Esophagus squamous epithelium (tissue), 5 donors: ENCODE measurements at regions of chr6 and their contacts with region 1.

Region 1: DNA sequence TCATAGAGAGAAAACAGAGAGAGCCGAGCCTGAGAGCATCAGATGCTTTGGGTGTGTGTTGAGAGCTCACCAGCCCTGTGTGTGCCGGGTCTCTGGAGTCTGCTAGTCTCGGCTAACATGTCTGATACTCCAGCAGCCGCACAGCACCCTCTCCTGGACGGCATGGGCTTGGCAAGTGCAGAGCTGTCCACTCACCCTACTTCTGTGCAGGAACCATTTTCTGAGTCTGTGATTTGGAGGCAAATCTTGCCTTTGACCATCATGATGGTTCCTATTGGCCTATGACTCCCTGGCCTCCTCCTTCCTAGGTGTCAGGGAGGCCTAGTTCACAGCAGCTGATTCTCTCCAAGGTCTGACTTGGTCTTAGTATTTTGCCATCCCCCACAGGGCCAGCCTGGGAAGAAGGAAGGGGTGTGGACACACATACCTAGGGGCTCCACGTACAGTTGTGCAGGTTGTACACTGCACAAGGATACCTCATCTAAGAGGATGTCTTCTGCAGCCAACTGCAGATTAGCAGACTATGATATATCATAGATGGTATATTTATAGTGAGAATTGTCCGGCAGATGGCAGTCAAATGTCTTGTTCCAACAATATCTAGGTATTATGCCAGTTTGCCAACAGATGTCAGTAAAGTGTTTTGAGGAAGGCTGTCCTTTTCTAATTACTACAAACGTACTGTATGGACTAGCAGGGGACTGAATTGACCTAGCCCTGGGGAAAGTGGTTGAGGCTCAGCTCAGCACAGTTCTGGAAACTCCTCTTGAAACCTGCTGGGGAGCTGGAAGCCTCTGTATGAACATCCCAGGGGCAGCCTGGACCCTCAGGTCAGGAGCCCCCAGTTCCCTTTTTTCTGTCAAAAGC is 13.0 kb downstream of the FGD2 start:
- DNase-seq: peak; percentile 43
- H3K4me3 ChIP-seq: no peak overlapping the region
- H3K27ac ChIP-seq: peak overlapping the region; percentile 28 to 55 (median 40)
- H3K4me1 ChIP-seq: peaks cover 11 to 54% (median 14%) of the 10 kb centered on the region in 3 donors
- H3K27me3 ChIP-seq: no peaks in the 10 kb centered on the region
- CTCF ChIP-seq: peak; percentile 64 to 95 (median 88)
- POLR2A ChIP-seq: no peak

Region 2: DNA sequence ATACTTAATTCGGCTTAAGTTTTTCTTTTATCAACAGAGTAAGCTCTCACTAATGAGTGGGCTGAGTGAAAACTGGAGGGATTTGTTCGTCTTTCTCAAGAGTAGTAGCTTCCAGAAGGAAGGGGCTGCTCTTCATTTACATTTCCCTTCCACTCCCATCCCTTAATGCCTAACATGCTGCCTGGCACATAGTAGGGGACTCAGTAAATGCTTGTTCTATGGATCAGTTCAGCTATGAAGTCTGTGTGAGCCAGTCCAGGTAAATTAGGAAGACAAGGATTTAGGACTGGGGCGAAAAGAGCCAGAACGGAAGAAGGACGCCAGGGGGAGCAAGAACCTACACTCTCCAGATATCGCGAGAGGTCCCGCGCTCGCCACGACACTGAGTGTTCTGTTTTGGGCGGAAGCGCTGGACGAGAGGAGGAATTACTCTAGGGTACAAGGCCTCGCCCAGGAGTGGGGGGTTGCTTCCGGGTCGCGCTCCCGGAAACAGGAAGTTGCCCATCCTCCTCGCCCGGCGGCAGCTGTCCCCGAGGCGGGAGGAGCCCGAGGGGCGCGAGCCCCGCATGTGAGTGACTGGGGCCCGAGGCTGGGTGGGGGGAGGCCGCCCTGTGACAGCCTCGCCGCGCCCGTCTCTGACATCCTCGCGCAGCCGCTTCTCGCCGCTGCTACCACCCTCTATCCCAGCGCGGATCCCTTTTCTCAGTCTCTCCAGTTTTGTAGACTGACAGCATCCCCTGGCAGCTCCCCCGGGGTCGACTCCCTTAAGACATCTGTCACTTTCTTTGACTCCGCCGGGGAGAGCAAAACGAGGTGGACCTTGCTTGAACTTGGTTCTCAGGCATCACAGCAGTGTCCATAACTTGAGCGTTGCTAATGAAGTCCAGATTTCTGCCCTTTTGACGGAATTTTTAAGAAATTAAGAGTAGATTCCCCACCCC is 132.7 kb before region 1 on chr6 and contains the start of gene C6orf89:
- intact Hi-C with region 1: loop called (anchors 10 kb)
- DNase-seq: peak; percentile 95
- H3K4me3 ChIP-seq: peak within 1 kb of the TSS; percentile 79 to 92 (median 83)
- H3K27ac ChIP-seq: peak within 1 kb of the TSS; percentile 89 to 93 (median 93)
- H3K4me1 ChIP-seq: peaks cover 0 to 38% (median 15%) of the 10 kb centered on the region in 3 donors
- H3K27me3 ChIP-seq: no peaks in the 10 kb centered on the region
- CTCF ChIP-seq: peak; percentile 78 to 96 (median 92)
- POLR2A ChIP-seq: peak in 2 of 4 donors; percentile 61 to 74
- total RNA-seq, gene C6orf89: 18.6 to 34.9 (median 23.1) TPM

Region 3: DNA sequence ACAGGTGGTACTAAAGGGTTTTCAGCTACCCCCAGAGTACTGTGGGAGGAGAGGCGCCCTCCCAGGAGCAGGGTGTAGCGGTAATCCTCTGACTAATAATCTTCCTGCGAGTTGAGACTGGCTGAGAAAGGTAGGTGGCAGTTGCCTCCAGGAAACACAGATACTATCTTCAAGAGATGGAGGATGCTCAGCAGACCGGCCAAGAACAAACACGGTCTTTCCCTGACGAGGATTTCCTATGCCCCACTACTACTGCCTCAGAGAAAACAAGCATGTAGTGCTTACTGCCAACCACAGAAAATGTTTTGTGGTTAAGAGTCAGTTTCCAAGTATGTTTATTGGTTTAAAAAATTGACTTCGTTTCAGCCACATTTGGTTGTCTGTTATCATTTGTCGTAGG is 105.8 kb before region 1 on chr6:
- intact Hi-C with region 1: loop called (anchors 10 kb)
- DNase-seq: no peak
- H3K4me3 ChIP-seq: no peak overlapping the region
- H3K27ac ChIP-seq: peak overlapping the region in 2 of 4 donors; percentile 7 to 51
- H3K4me1 ChIP-seq: peaks cover 3 to 62% (median 26%) of the 10 kb centered on the region in 3 donors
- H3K27me3 ChIP-seq: no peaks in the 10 kb centered on the region
- CTCF ChIP-seq: no peak
- POLR2A ChIP-seq: no peak

Region 4: GRCh38 chr6:37059344-37060206 is 41.1 kb after region 1 on chr6:
- intact Hi-C with region 1: no loop called
- DNase-seq: no peak
- H3K4me3 ChIP-seq: peak overlapping the region in 2 of 4 donors; percentile 13
- H3K27ac ChIP-seq: peak overlapping the region; percentile 81 to 94 (median 90)
- H3K4me1 ChIP-seq: peaks cover 24 to 67% (median 38%) of the 10 kb centered on the region in 3 donors
- H3K27me3 ChIP-seq: no peaks in the 10 kb centered on the region
- CTCF ChIP-seq: peak in 5 of 6 experiments; percentile 52 to 76 (median 64)
- POLR2A ChIP-seq: peak in 1 of 4 donors; percentile 12

Region 5: GRCh38 chr6:37083243-37084138 is 65.1 kb after region 1 on chr6:
- intact Hi-C with region 1: no loop called
- DNase-seq: no peak
- H3K4me3 ChIP-seq: no peak overlapping the region
- H3K27ac ChIP-seq: peak overlapping the region; percentile 70 to 89 (median 82)
- H3K4me1 ChIP-seq: peaks cover 15 to 47% (median 17%) of the 10 kb centered on the region in 3 donors
- H3K27me3 ChIP-seq: no peaks in the 10 kb centered on the region
- CTCF ChIP-seq: peak in 1 of 6 experiments; percentile 4
- POLR2A ChIP-seq: no peak

Region 6: DNA sequence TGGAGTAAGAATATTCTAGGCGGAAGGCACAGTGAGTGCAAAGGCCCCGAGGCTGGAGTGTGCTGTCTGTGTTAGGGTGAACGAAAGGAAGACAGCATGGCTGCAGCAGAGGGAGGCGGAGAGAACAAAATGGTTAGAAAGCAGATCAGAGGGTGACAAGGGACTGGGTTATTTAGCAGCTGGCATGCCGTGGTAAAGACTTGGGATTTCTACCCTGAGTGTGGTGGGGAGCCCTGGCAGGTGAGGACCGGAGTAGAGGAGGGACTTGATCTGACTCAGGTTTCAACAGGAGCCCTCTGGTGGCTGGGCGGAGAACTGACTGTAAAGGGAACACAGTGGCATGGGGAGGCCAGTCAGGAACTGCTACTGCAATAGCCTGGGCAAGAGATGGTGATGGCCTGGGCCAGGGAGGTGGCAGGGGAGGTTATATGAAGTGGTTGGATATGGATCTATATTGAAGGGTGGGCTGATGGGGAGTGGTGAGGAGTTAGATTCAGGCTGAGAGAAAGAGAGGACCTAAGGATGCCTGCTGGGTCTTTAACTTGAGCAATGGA is 189.5 kb after region 1 on chr6:
- intact Hi-C with region 1: loop called (anchors 2 kb)
- DNase-seq: peak; percentile 30
- H3K4me3 ChIP-seq: no peak overlapping the region
- H3K27ac ChIP-seq: peak overlapping the region in 1 of 4 donors; percentile 7
- H3K4me1 ChIP-seq: peaks cover 5 to 34% (median 7%) of the 10 kb centered on the region in 3 donors
- H3K27me3 ChIP-seq: no peaks in the 10 kb centered on the region
- CTCF ChIP-seq: peak; percentile 71 to 93 (median 87)
- POLR2A ChIP-seq: no peak